ENCODE measurements at regions of chr15 and their contacts with region 1.

Region 1: GRCh38 chr15:56428821-56429458 is 36.0 kb downstream of the MNS1 start:
- DNase-seq: peak; percentile 49
- H3K4me3 ChIP-seq: no peak overlapping the region
- H3K27ac ChIP-seq: no peak overlapping the region
- H3K4me1 ChIP-seq: no peaks in the 10 kb centered on the region
- H3K27me3 ChIP-seq: no peaks in the 10 kb centered on the region
- CTCF ChIP-seq: peak; percentile 14 to 17
- POLR2A ChIP-seq: no peak

Region 2: GRCh38 chr15:56052395-56053045 is 376.4 kb before region 1 on chr15:
- CTCF ChIA-PET with region 1: interaction called, 4 read pairs
- POLR2A ChIA-PET with region 1: no interaction called
- dilution Hi-C with region 1: no loop called
- intact Hi-C with region 1: loop called (anchors 1 kb)
- DNase-seq: peak; percentile 56
- H3K4me3 ChIP-seq: no peak overlapping the region
- H3K27ac ChIP-seq: no peak overlapping the region
- H3K4me1 ChIP-seq: peaks cover 3% of the 10 kb centered on the region
- H3K27me3 ChIP-seq: no peaks in the 10 kb centered on the region
- CTCF ChIP-seq: peak; percentile 40 to 60
- POLR2A ChIP-seq: no peak

Region 3: GRCh38 chr15:56772868-56773639 is 344.1 kb after region 1 on chr15:
- CTCF ChIA-PET with region 1: no interaction called
- POLR2A ChIA-PET with region 1: no interaction called
- dilution Hi-C with region 1: no loop called
- intact Hi-C with region 1: no loop called
- DNase-seq: no peak
- H3K4me3 ChIP-seq: no peak overlapping the region
- H3K27ac ChIP-seq: no peak overlapping the region
- H3K4me1 ChIP-seq: peaks cover 18% of the 10 kb centered on the region
- H3K27me3 ChIP-seq: no peaks in the 10 kb centered on the region
- CTCF ChIP-seq: no peak
- POLR2A ChIP-seq: no peak